A549 (cell line): ENCODE measurements at regions of chr9 and their contacts with region 1.

Region 1: GRCh38 chr9:14353222-14354056 is 39.5 kb upstream of the NFIB start:
- DNase-seq: peak; percentile 81 to 91
- ATAC-seq: peak; percentile 91 to 96
- H3K4me3 ChIP-seq: 0 out of 3 replicates have a peak overlapping the region, but pooled peaks have one; percentile 14
- H3K27ac ChIP-seq: peak overlapping the region in 1 of 2 experiments; percentile 42; a peak in 2 of 6 replicates
- H3K4me1 ChIP-seq: peaks cover 4% of the 10 kb centered on the region; the same call in 1 of the 3 replicates
- CTCF ChIP-seq: peak; percentile 87
- EP300 ChIP-seq: no peak
- POLR2A ChIP-seq: no peak
- RAD21 ChIP-seq: peak; percentile 94 to 95

Region 2: GRCh38 chr9:13351778-13352386 is 1001.6 kb before region 1 on chr9:
- CTCF ChIA-PET with region 1: interaction called, 15 read pairs
- POLR2A ChIA-PET with region 1: no interaction called
- DNase-seq: peak; percentile 14 to 56
- ATAC-seq: peak in 1 of 2 experiments; percentile 64; a peak in 2 of 6 replicates
- H3K4me3 ChIP-seq: no peak overlapping the region
- H3K27ac ChIP-seq: no peak overlapping the region
- H3K4me1 ChIP-seq: no peaks in the 10 kb centered on the region
- CTCF ChIP-seq: peak; percentile 73
- EP300 ChIP-seq: no peak
- POLR2A ChIP-seq: no peak
- RAD21 ChIP-seq: peak; percentile 67 to 71

Region 3: GRCh38 chr9:13437866-13438265 is 915.6 kb before region 1 on chr9:
- CTCF ChIA-PET with region 1: interaction called, 15 read pairs
- POLR2A ChIA-PET with region 1: no interaction called
- DNase-seq: no peak
- ATAC-seq: no peak
- H3K4me3 ChIP-seq: no peak overlapping the region
- H3K27ac ChIP-seq: no peak overlapping the region
- H3K4me1 ChIP-seq: no peaks in the 10 kb centered on the region
- CTCF ChIP-seq: no peak
- EP300 ChIP-seq: no peak
- POLR2A ChIP-seq: no peak
- RAD21 ChIP-seq: no peak

Region 4: DNA sequence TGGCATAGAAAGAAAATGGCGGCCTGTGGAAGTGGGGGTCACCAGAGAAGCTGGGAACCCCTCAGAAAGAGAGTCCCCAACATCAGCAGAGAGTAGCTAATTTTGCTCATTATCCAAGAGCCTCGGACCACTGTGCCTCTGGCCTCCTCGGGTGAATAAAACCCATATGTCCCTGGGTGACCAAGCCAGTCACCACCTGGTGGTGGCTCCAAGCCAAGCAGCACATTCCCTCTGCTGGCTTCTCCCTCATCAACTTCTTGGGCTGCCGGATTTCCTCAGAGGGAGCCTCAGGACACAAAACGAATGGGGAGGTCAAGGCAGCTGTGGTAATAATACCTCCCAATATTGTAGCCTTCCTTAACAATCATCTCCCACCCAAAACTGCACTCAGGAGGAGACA is 282.0 kb before region 1 on chr9:
- CTCF ChIA-PET with region 1: interaction called, 21 read pairs
- POLR2A ChIA-PET with region 1: no interaction called
- DNase-seq: no peak
- ATAC-seq: no peak
- H3K4me3 ChIP-seq: no peak overlapping the region
- H3K27ac ChIP-seq: no peak overlapping the region
- H3K4me1 ChIP-seq: no peaks in the 10 kb centered on the region
- CTCF ChIP-seq: no peak
- EP300 ChIP-seq: no peak
- POLR2A ChIP-seq: no peak
- RAD21 ChIP-seq: no peak

Region 5: GRCh38 chr9:14341437-14342122 is 11.9 kb before region 1 on chr9:
- CTCF ChIA-PET with region 1: interaction called, 18 read pairs
- POLR2A ChIA-PET with region 1: no interaction called
- DNase-seq: no peak
- ATAC-seq: no peak
- H3K4me3 ChIP-seq: no peak overlapping the region
- H3K27ac ChIP-seq: no peak overlapping the region
- H3K4me1 ChIP-seq: peaks cover 10% of the 10 kb centered on the region; the same call in 1 of the 3 replicates
- CTCF ChIP-seq: no peak
- EP300 ChIP-seq: no peak
- POLR2A ChIP-seq: no peak
- RAD21 ChIP-seq: no peak

Region 6: GRCh38 chr9:14372437-14373335 is 19.2 kb after region 1 on chr9:
- CTCF ChIA-PET with region 1: interaction called, 40 read pairs
- POLR2A ChIA-PET with region 1: interaction called, 4 read pairs
- DNase-seq: peak; percentile 52 to 67
- ATAC-seq: peak; percentile 93 to 96
- H3K4me3 ChIP-seq: no peak overlapping the region
- H3K27ac ChIP-seq: peak overlapping the region; percentile 77 to 82
- H3K4me1 ChIP-seq: peaks cover 26% of the 10 kb centered on the region
- CTCF ChIP-seq: no peak
- EP300 ChIP-seq: no peak
- POLR2A ChIP-seq: no peak
- RAD21 ChIP-seq: 0 out of 5 replicates have a peak, but pooled peaks of 1 of the 2 experiments have one; percentile 20

Region 7: GRCh38 chr9:14415947-14416346 is 62.5 kb after region 1 on chr9:
- CTCF ChIA-PET with region 1: interaction called, 10 read pairs
- POLR2A ChIA-PET with region 1: no interaction called
- DNase-seq: no peak
- ATAC-seq: no peak
- H3K4me3 ChIP-seq: no peak overlapping the region
- H3K27ac ChIP-seq: no peak overlapping the region
- H3K4me1 ChIP-seq: no peaks in the 10 kb centered on the region
- CTCF ChIP-seq: no peak
- EP300 ChIP-seq: no peak
- POLR2A ChIP-seq: no peak
- RAD21 ChIP-seq: no peak